ENCODE measurements at regions of chr16 and their contacts with region 1.

Region 1: GRCh38 chr16:27665881-27666280 is 115.9 kb downstream of the KATNIP start:
- DNase-seq: no peak
- ATAC-seq: no peak
- H3K4me3 ChIP-seq: no peak overlapping the region
- H3K4me3 Mint-ChIP-seq: no peak overlapping the region
- H3K27ac ChIP-seq: no peak overlapping the region
- H3K27ac Mint-ChIP-seq: no peak overlapping the region
- H3K4me1 ChIP-seq: no peaks in the 10 kb centered on the region
- H3K4me1 Mint-ChIP-seq: no peaks in the 10 kb centered on the region
- H3K27me3 ChIP-seq: no peaks in the 10 kb centered on the region
- H3K27me3 Mint-ChIP-seq: no peaks in the 10 kb centered on the region
- CTCF ChIP-seq: no peak

Region 2: DNA sequence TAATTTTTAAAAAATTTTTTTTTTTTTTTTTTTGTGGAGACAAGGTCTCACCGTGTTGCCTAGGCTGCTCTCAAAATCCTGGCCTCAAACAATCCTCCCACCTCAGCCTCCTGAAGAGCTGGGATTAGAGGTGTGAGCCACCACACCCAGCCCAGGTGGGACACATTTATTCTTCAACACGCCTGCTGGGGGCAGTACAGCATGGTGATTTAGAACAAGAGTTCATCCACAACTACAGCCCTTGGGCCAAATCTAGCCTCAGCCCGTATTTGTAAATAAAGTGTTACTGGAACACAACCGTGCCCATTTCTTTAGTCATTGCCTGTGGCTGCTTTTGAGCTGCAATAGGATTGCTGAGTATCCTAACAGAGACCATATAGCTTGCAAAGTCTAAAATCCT is 23.1 kb before region 1 on chr16:
- CTCF ChIA-PET with region 1: no interaction called
- POLR2A ChIA-PET with region 1: no interaction called
- intact Hi-C with region 1: loop called in 1 of 2 experiments (anchors 1 kb)
- DNase-seq: peak in 1 of 9 experiments; percentile 20
- ATAC-seq: no peak
- H3K4me3 ChIP-seq: no peak overlapping the region
- H3K4me3 Mint-ChIP-seq: no peak overlapping the region
- H3K27ac ChIP-seq: no peak overlapping the region
- H3K27ac Mint-ChIP-seq: no peak overlapping the region
- H3K4me1 ChIP-seq: no peaks in the 10 kb centered on the region
- H3K4me1 Mint-ChIP-seq: no peaks in the 10 kb centered on the region
- H3K27me3 ChIP-seq: no peaks in the 10 kb centered on the region
- H3K27me3 Mint-ChIP-seq: no peaks in the 10 kb centered on the region
- CTCF ChIP-seq: no peak

Measured in CD8-positive, alpha-beta T cell (primary cell).